Cardiac septum (tissue), 1 donor: ENCODE measurements at regions of chr14 and their contacts with region 1.

Region 1: DNA sequence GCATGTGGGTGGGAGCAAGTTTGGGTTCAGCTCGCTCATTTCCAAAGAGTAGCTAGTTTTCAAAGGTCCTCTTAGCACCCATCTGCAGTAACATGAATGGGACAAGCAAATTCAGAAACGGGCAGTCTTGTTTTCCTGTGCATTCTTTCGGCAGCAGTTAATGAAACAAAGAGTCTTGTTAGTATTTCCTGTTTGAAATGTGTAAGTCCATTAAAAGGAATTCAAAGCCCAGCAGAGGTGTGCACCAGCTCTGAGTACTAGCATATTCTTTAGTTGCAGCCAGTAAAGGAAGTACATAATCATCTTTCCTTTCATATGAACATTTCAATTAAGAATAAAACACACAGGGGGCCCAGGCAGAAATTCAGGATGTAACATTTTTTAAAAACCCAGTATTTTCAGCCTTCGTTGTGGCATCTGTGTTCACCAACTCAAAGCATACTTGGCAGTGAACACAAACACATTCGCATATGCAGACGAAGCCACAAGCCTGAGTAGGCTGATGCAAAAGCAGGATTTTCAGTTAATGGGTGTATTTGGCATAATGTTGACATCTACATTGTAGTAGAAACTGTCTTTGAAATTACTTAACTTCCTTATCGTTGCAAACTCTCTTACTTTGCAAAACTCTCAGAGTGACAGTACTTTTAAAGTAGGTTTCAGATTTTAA is 570.0 kb upstream of the FLRT2 start:
- DNase-seq: no peak

Region 2: DNA sequence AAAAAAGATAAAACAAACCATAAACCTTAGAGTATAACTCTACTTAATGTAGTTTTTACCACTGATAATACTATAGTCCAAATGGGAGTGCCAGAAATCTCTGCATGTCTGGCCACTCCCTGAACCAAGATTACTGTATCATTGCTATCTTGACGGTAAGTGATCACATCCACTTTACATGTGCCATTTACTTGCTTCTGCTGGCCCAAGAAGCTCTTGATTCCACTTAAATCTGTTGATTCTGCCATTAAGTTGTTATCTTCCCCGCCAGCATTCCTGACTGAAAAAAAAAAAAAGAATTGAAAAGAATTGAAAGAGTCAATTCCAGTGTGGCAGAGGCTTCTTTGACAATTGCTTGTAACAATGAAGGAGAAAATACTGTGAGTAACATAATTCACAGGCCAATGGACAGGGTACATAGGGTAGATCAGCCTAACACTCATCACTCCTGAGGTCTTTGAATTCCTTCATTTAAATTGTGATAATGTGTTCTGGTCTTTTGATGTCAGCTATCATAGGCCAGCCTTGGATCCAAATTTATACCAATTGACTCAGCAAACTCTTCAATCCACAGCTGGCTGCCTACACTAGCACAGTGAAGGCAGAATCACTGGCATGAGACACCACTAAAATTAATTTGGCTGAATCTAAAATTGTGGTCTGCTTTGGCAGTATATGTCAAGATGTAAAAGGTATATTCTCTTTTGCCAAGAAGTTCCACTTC is 95.3 kb before region 1 on chr14:
- intact Hi-C with region 1: loop called (anchors 5 kb)
- DNase-seq: no peak